ENCODE measurements at regions of chr1 and their contacts with region 1.

Region 1: GRCh38 chr1:45470306-45470798 is 20.6 kb downstream of the TESK2 start:
- DNase-seq: no peak
- ATAC-seq: no peak
- H3K4me3 ChIP-seq: no peak overlapping the region
- H3K27ac ChIP-seq: no peak overlapping the region
- H3K4me1 ChIP-seq: no peaks in the 10 kb centered on the region
- H3K27me3 ChIP-seq: no peaks in the 10 kb centered on the region
- CTCF ChIP-seq: no peak

Region 2: DNA sequence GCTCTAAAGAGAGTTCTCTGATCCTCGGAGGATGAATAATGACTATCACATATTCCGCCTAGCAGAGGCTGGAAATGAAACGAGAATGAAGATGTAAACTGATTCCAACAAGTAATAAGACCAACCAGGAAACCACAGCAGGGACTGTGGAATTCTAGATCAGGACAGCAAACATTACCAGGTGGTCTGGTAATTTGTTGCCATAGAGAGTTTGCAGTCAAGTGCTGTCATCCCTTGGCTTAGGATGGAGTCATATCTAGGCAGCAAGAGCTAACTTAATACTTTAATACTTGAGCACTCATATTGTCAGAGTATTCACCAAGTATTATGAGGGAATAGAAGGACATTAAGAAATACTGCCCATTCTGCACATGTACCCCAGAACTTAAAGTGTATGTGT is 85.0 kb before region 1 on chr1:
- intact Hi-C with region 1: loop called in 1 of 10 experiments (anchors 10 kb)
- DNase-seq: no peak
- ATAC-seq: no peak
- H3K4me3 ChIP-seq: no peak overlapping the region
- H3K27ac ChIP-seq: no peak overlapping the region
- H3K4me1 ChIP-seq: no peaks in the 10 kb centered on the region
- H3K27me3 ChIP-seq: no peaks in the 10 kb centered on the region
- CTCF ChIP-seq: no peak

Region 3: DNA sequence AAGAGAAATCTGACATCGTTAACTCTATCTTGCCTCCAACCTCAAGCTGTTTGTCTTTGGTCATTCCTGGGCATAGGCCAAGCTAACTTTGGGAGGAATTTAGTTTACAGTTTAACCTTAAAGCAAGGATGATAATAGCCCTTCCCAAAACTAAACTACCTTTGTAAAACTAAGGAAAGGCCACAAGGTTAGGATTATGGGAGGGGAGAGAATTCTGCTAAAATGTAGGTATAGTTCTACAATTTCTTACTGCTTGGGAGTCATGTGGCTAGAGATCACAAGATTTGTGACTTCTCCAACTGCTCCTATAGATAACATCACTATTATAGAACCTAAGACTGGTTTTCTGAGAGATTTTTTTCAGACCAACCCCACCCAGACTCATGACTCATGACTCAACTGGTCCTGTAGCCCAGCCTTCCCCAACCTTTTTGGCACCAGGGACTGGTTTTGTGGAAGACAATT is 59.5 kb before region 1 on chr1:
- intact Hi-C with region 1: no loop called
- DNase-seq: no peak
- ATAC-seq: no peak
- H3K4me3 ChIP-seq: no peak overlapping the region
- H3K27ac ChIP-seq: no peak overlapping the region
- H3K4me1 ChIP-seq: no peaks in the 10 kb centered on the region
- H3K27me3 ChIP-seq: no peaks in the 10 kb centered on the region
- CTCF ChIP-seq: no peak

Measured in heart right ventricle (tissue), 16 donors.